Transverse colon (tissue), 4 donors: ENCODE measurements at regions of chr7 and their contacts with region 1.

Region 1: DNA sequence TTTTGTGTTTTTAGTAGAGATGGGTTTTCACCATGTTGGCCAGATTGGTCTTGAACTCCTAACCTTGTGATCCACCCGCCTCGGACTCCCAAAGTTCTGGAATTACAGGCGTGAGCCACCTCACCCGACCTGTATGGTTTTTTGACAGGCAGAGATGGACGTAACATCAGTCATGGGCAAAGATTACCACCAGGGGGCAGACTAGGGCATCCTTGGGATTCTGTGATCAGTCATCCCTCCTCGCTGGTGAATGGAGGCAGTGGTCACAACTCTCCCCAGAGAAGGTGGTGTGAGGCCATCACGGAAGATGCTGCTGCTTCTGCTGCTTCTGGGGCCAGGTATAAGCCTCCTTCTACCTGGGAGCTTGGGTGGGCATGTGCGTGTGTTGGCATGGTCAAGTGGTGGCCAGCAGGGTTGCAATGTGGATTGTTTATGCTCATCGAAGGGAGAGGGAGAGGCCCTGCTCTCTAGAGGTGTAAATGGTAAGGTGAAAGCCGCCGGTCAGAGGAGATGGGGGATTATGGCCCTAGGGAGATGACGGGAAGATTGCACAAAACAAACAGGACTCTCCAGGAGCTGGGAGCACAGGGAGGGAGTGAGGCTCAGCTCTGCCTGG is 122.7 kb upstream of the PRSS1 start:
- DNase-seq: peak; percentile 56
- H3K4me3 ChIP-seq: no peak overlapping the region
- H3K27ac ChIP-seq: no peak overlapping the region
- H3K4me1 ChIP-seq: no peaks in the 10 kb centered on the region
- H3K27me3 ChIP-seq: peaks cover 18% of the 10 kb centered on the region
- CTCF ChIP-seq: peak; percentile 42 to 62 (median 43)
- EP300 ChIP-seq: no peak
- POLR2A ChIP-seq: no peak

Region 2: GRCh38 chr7:142646386-142647140 is 20.0 kb after region 1 on chr7:
- in situ Hi-C with region 1: no loop called
- intact Hi-C with region 1: no loop called
- DNase-seq: no peak
- H3K4me3 ChIP-seq: no peak overlapping the region
- H3K27ac ChIP-seq: no peak overlapping the region
- H3K4me1 ChIP-seq: no peaks in the 10 kb centered on the region
- H3K27me3 ChIP-seq: peaks cover 28% of the 10 kb centered on the region
- CTCF ChIP-seq: no peak
- EP300 ChIP-seq: no peak
- POLR2A ChIP-seq: no peak

Region 3: GRCh38 chr7:142657376-142657775 is 30.8 kb after region 1 on chr7:
- in situ Hi-C with region 1: no loop called
- intact Hi-C with region 1: no loop called
- DNase-seq: no peak
- H3K4me3 ChIP-seq: no peak overlapping the region
- H3K27ac ChIP-seq: no peak overlapping the region
- H3K4me1 ChIP-seq: no peaks in the 10 kb centered on the region
- H3K27me3 ChIP-seq: no peaks in the 10 kb centered on the region
- CTCF ChIP-seq: no peak
- EP300 ChIP-seq: no peak
- POLR2A ChIP-seq: no peak

Region 4: GRCh38 chr7:142771353-142771723 is 144.8 kb after region 1 on chr7:
- in situ Hi-C with region 1: loop called in 3 of 4 experiments (anchors 10 to 25 kb)
- intact Hi-C with region 1: no loop called
- DNase-seq: no peak
- H3K4me3 ChIP-seq: no peak overlapping the region
- H3K27ac ChIP-seq: no peak overlapping the region
- H3K4me1 ChIP-seq: no peaks in the 10 kb centered on the region
- H3K27me3 ChIP-seq: no peaks in the 10 kb centered on the region
- CTCF ChIP-seq: no peak
- EP300 ChIP-seq: no peak
- POLR2A ChIP-seq: no peak

Region 5: DNA sequence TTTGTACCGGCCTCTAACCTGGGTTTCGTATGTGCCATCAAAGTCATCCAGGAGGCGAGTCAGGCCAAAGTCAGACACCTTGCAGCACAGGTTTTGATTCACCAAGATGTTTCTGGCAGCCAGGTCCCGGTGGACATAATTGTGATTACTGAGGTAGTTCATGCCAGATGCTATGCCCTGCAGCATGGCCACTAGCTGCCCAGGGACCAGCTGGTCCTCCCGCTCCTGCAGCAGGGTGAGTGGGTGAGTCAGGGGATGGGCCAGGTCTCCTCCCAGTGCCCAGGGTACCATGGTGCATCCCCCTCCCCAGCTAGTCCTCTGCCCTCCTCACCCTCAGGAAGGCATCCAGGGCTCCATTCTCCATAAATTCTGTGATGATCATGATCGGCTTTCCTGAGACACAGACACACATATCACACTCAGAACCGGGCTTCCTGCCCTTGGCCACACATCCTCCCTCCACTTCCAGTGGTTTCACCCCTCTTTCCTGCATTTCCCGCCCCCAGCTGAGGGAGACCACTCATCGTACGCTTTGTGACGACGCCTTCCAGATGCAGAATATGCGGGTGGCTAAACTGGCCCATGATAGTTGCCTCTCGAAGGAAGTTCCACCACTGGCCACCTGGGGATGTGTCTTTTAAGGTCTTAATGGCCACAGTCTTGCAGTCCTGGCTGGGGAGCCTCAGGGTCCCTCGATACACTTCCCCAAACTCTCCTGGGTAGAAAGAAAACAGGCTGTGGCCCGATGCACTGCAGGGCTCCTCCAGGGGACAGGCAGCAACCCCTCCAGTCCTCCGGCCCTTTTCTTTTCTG is 768.5 kb after region 1 on chr7:
- in situ Hi-C with region 1: no loop called
- intact Hi-C with region 1: no loop called
- DNase-seq: no peak
- H3K4me3 ChIP-seq: no peak overlapping the region
- H3K27ac ChIP-seq: no peak overlapping the region
- H3K4me1 ChIP-seq: peaks cover 10 to 29% (median 24%) of the 10 kb centered on the region in 4 donors
- H3K27me3 ChIP-seq: no peaks in the 10 kb centered on the region
- CTCF ChIP-seq: peak in 2 of 5 experiments; percentile 13 to 25
- EP300 ChIP-seq: no peak
- POLR2A ChIP-seq: no peak